Dendritic cell treated with granulocyte-macrophage colony-stimulating factor and Interleukin-4, amounts not matched to agents 40 ng/mL and 50 ng/mL, for 4 days (primary cell): ENCODE measurements at regions of chr3 and their contacts with region 1.

Region 1: GRCh38 chr3:123552095-123552714 is 32.6 kb downstream of the HACD2 start:
- H3K4me3 Mint-ChIP-seq: no peak overlapping the region
- H3K27ac Mint-ChIP-seq: no peak overlapping the region
- H3K4me1 Mint-ChIP-seq: peaks cover 5% of the 10 kb centered on the region
- H3K27me3 Mint-ChIP-seq: no peaks in the 10 kb centered on the region

Region 2: DNA sequence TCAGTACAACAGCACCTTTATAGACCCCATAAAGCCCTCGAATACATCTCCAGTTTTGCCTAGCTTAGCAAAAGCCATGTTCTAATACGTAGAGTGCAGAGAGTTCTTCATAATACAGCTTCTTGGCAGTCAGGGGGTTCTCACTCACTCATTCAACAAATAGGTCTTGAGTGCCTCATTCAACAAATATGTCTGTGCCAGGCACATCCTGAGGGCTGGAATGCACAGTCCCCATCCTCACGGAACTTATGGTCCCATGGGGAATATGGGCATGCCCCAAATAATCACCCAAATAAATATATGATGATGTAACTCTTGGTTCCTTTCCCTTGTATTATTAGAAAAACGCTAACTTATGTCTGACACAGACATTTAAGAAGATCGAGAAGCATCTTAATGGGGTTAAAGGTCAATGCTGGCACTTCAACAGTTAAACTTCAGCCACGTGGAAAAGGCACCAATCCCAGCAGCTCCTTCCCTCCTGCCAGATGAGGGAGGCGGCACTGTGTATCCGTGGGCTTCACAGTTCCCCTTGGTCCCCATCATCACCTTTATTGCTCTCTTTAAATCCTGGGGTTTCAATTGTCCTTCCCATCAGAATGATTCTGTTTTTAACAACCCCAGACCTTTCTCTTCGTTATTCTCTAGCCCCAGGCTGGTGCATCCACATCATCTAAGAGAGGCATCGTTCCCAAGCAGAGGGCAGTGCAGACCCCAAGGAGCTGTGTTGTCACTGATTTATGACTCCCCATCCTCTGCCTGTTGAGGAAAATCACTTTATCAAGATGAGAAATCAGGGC is 505.7 kb before region 1 on chr3:
- intact Hi-C with region 1: no loop called
- H3K4me3 Mint-ChIP-seq: no peak overlapping the region
- H3K27ac Mint-ChIP-seq: no peak overlapping the region
- H3K4me1 Mint-ChIP-seq: no peaks in the 10 kb centered on the region
- H3K27me3 Mint-ChIP-seq: peaks cover 2% of the 10 kb centered on the region

Region 3: DNA sequence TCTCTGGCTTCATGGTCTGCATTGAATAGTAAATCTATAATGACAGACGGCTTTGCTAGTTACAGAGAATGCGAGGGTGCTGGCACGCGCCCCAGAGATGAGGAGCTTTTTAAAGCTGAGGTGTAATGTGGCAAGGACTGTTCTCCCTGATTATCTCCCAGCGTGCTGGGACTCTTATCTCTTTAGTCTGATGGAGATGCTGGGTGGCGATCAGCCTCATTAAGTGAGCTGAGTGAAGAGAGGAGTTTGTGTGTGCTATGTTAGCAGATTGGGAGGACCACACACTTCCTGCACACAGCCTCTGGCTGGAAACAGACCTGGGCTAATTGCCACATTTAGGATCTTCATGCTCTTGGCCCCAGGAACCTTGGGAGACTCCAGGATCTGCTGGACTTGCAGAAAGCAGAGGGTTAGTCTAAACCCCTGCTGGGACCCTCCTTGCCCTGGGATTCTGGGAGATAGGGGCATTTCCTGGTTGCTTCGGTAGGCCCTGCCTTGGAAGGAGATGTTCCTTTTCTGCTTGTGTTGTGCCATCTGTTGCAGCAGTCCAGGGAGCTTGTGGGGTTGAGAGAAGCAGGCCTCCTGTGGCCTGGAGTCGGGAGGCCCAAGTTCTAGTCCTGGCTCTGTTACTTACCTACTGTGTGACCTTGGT is 470.4 kb before region 1 on chr3:
- intact Hi-C with region 1: no loop called
- H3K4me3 Mint-ChIP-seq: no peak overlapping the region
- H3K27ac Mint-ChIP-seq: no peak overlapping the region
- H3K4me1 Mint-ChIP-seq: peaks cover 39% of the 10 kb centered on the region
- H3K27me3 Mint-ChIP-seq: no peaks in the 10 kb centered on the region

Region 4: GRCh38 chr3:123344175-123344906 is 207.9 kb before region 1 on chr3:
- intact Hi-C with region 1: loop called (anchors 5 kb)
- H3K4me3 Mint-ChIP-seq: no peak overlapping the region
- H3K27ac Mint-ChIP-seq: no peak overlapping the region
- H3K4me1 Mint-ChIP-seq: no peaks in the 10 kb centered on the region
- H3K27me3 Mint-ChIP-seq: peaks cover 11% of the 10 kb centered on the region

Region 5: DNA sequence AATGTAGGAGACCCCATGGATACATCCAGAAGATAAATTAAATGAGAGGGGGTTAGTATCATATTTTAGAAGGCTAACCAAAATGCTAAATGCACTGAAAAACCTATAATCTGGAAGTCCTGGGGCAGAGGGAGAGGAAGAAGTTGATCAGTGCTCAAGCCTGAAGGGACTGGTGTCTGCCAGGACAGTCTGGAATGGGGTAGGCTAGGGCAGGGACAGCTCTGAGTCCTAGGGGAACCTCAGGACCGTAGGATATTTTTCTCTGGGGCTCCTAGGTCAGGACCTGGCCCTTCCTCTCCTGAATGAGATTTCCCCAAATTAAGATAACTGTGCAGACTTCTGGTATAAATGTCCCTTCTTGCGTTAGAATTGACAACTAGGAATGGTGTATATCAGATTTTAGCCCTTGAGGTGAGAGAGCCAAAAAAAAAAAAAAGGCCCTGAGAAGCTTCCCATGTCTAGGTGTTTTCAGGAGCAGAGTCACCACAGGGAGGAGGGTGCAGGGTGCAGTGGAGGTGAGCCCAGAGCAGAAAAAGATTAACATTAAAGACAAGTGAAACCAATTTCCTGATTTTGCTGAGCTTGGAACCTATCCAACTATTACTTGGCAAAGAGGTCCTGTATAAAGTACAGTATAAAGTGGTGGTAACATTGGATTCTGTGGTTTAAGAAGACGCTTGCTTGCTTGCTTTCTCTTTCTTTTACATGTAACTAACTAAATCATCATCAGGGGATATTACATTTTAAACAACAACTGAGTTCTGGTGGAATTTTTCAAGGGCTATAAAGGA is 30.8 kb before region 1 on chr3:
- intact Hi-C with region 1: no loop called
- H3K4me3 Mint-ChIP-seq: no peak overlapping the region
- H3K27ac Mint-ChIP-seq: peak overlapping the region; percentile 30
- H3K4me1 Mint-ChIP-seq: peaks cover 32% of the 10 kb centered on the region
- H3K27me3 Mint-ChIP-seq: no peaks in the 10 kb centered on the region

Region 6: DNA sequence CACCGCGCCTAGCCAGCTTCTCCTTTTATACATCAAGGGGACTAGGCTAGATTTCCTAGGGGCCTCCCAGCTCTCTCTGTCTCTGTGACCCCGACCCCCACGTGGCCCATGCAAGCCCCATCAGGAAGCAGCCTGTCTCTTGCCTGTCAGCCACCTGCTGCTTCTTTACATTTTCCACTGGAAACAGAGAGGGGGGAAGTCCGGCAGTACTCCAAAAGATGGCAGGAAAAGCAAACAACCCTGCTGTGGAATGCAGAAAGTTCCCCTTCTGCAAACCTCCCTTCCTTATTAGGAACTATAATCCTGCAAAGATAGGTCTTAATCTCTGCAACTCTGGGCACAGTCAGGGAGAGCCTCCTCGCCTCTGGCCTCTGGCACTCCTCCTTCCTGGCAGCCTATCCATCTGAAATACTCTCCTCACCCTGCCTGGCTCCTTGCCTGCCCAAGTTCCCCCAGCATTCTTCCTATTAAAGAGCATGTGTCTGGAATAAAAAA is 80.0 kb after region 1 on chr3:
- intact Hi-C with region 1: no loop called
- H3K4me3 Mint-ChIP-seq: no peak overlapping the region
- H3K27ac Mint-ChIP-seq: peak overlapping the region; percentile 51
- H3K4me1 Mint-ChIP-seq: peaks cover 22% of the 10 kb centered on the region
- H3K27me3 Mint-ChIP-seq: peaks cover 1% of the 10 kb centered on the region